PC-9 (cell line): ENCODE measurements at regions of chr14 and their contacts with region 1.

Region 1: DNA sequence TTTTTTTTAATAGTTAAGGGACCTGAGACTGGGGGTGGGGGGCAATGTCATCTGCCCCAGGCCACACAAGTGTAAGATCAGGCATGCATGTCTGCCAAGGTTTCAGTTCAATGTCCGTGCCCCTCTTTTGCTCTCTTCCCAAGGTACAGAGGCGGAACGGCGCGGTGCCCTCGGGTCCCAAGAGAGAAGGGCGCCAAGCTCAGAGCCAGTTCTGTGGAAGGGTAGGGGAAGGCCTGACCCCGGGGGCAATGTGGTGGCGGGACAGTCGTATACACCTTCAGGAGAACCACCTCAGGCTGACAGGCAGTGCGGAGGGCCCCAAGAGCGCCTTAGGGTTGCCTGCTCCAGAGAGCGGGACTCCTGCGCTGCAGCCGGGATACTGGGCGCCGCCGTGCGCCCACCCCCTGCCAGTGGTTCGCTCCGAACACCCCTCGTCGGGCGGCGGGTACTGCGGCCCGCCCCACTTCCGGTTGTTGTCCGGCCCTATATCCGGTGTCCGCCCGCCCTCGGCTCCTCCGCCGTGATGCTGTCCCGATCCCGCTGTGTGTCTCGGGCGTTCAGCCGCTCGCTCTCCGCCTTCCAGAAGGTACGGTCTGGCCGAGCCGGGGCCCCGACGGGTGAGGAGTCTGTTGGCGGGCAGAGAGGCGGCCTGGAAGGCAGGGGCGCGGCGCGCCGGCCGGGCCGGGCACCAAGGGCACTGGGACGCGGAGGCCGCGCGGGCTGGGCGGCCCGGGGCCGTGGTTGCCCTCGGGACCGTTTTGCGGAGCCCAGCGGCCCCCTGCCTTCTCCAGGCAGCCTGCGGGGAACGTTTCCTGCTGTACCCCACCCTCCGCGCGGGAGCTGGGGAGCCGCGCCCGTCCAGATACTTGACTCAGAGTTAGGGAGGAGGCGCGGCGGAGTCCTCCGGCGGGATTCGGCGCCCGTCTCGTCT is at the start of gene DLST:
- DNase-seq: peak; percentile 78 to 99
- H3K4me3 ChIP-seq: peak within 1 kb of the TSS; percentile 75
- H3K27ac ChIP-seq: peak within 1 kb of the TSS; percentile 17
- H3K4me1 ChIP-seq: peaks cover 49% of the 10 kb centered on the region
- H3K27me3 ChIP-seq: no peaks in the 10 kb centered on the region
- CTCF ChIP-seq: no peak
- total RNA-seq, gene DLST: 309 and 320 TPM in 2 replicates

Region 2: DNA sequence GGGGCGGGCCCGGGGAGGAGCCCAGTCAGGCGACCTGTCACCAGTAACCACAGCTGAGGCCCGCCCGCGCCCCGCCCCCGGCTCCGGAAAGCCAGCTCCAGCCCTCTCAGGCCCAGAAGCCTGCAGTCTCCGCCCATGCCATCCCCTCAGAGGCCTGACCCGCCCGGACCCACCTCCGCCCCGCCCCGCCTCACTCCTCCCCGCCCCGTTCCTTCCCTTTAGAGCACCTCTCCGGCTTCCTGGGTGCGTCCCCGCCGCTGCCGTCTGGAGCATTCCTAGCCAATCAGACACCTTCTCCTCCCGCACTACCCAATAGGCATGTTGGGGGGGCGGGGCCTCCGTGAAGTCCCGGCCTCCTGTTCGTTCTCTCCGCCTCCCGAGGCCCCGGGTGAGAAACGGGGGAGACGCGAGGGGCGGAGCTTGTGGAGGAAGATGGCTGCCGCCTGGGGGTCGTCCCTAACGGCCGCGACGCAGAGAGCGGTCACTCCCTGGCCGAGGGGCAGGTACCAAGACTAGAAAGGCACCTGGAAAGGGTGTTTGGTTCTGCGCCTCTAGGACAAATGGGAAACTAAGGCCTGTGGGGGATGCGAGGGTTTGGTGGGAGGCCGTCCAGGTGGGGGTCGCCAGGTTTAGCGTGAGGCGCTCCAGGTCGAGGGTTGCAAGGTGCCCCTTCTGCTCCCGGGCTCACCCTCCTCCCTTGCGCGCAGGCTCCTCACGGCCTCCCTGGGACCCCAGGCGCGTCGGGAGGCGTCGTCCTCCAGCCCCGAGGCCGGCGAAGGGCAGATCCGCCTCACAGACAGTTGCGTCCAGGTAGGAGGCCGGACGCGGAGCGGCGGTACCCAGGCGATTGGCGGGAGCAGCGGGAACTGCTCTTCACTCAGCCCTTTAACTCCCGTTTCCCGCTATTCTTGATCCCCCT is 388.1 kb before region 1 on chr14 and contains the start of gene ISCA2:
- CTCF ChIA-PET with region 1: no interaction called
- POLR2A ChIA-PET with region 1: no interaction called
- intact Hi-C with region 1: loop called (anchors 5 kb)
- DNase-seq: peak; percentile 100
- H3K4me3 ChIP-seq: peak within 1 kb of the TSS; percentile 81
- H3K27ac ChIP-seq: peak within 1 kb of the TSS; percentile 54
- H3K4me1 ChIP-seq: peaks cover 52% of the 10 kb centered on the region
- H3K27me3 ChIP-seq: no peaks in the 10 kb centered on the region
- CTCF ChIP-seq: no peak
- total RNA-seq, gene ISCA2: 83.2 and 86.5 TPM in 2 replicates

Region 3: GRCh38 chr14:74860906-74861733 is 20.6 kb before region 1 on chr14:
- CTCF ChIA-PET with region 1: interaction called, 26 read pairs
- POLR2A ChIA-PET with region 1: interaction called, 6 read pairs
- intact Hi-C with region 1: no loop called
- DNase-seq: peak; percentile 73 to 96
- H3K4me3 ChIP-seq: no peak overlapping the region
- H3K27ac ChIP-seq: no peak overlapping the region
- H3K4me1 ChIP-seq: peaks cover 5% of the 10 kb centered on the region; the same call in 1 of the 2 replicates
- H3K27me3 ChIP-seq: no peaks in the 10 kb centered on the region
- CTCF ChIP-seq: peak; percentile 99

Region 4: DNA sequence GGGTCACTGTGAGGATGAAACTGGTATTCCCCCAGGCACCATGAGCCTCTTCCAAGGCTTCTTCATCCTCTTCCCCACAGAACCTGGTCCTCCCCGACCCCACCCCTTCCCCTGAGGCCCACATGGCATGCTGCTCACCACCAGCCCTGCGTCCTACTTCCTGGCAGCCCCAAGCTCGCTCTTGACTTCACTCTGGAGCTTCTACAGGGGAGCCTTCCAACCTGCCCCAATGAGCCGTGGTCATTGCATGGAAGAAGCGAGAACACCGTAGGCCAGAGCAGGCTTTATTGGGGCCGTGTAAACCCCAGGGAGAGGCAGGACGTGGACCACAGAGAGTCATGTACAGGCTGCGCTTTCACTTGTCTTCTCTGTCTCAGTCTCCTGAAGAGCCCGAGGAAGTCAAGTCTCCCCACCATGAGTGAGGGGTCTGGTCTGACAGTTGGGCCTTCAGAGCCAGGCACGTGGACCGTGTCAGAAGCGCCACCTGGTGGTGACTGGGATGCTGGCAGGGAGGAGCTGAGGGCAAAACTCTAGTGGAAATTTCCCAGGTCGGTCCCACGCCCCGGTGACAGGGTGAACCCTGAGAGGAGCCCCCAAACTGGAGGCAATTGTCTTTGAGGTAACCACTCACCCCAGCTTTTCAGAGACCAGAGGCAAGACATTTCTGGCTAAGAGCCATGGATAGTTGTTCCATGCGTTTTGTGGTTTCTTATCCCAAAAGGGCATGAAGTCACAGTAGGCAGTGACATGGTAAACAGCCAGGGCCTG is 23.9 kb after region 1 on chr14:
- CTCF ChIA-PET with region 1: interaction called, 50 read pairs
- POLR2A ChIA-PET with region 1: interaction called, 7 read pairs
- intact Hi-C with region 1: no loop called
- DNase-seq: peak in 1 of 2 experiments; percentile 78
- H3K4me3 ChIP-seq: no peak overlapping the region
- H3K27ac ChIP-seq: no peak overlapping the region
- H3K4me1 ChIP-seq: no peaks in the 10 kb centered on the region
- H3K27me3 ChIP-seq: no peaks in the 10 kb centered on the region
- CTCF ChIP-seq: peak; percentile 100

Region 5: GRCh38 chr14:75188520-75189268 is 307.0 kb after region 1 on chr14:
- CTCF ChIA-PET with region 1: interaction called, 11 read pairs
- POLR2A ChIA-PET with region 1: no interaction called
- intact Hi-C with region 1: no loop called
- DNase-seq: no peak
- H3K4me3 ChIP-seq: no peak overlapping the region
- H3K27ac ChIP-seq: no peak overlapping the region
- H3K4me1 ChIP-seq: peaks cover 31% of the 10 kb centered on the region
- H3K27me3 ChIP-seq: no peaks in the 10 kb centered on the region
- CTCF ChIP-seq: no peak